MCF 10A (cell line): ENCODE measurements at regions of chr17 and their contacts with region 1.

Region 1: GRCh38 chr17:75289115-75289831 is at the start of gene SLC25A19:
- DNase-seq: peak; percentile 98
- H3K4me3 Mint-ChIP-seq: peak within 1 kb of the TSS; percentile 98
- H3K27ac Mint-ChIP-seq: peak within 1 kb of the TSS; percentile 97
- H3K4me1 Mint-ChIP-seq: peaks cover 7% of the 10 kb centered on the region
- H3K27me3 Mint-ChIP-seq: no peaks in the 10 kb centered on the region
- CTCF ChIP-seq: no peak
- total RNA-seq, gene SLC25A19: 14.8 and 22.6 TPM in 2 replicates

Region 2: GRCh38 chr17:75228305-75228704 is 61.0 kb before region 1 on chr17:
- CTCF ChIA-PET with region 1: no interaction called
- POLR2A ChIA-PET with region 1: no interaction called
- intact Hi-C with region 1: no loop called
- DNase-seq: no peak
- H3K4me3 Mint-ChIP-seq: no peak overlapping the region
- H3K27ac Mint-ChIP-seq: no peak overlapping the region
- H3K4me1 Mint-ChIP-seq: no peaks in the 10 kb centered on the region
- H3K27me3 Mint-ChIP-seq: no peaks in the 10 kb centered on the region
- CTCF ChIP-seq: no peak

Region 3: DNA sequence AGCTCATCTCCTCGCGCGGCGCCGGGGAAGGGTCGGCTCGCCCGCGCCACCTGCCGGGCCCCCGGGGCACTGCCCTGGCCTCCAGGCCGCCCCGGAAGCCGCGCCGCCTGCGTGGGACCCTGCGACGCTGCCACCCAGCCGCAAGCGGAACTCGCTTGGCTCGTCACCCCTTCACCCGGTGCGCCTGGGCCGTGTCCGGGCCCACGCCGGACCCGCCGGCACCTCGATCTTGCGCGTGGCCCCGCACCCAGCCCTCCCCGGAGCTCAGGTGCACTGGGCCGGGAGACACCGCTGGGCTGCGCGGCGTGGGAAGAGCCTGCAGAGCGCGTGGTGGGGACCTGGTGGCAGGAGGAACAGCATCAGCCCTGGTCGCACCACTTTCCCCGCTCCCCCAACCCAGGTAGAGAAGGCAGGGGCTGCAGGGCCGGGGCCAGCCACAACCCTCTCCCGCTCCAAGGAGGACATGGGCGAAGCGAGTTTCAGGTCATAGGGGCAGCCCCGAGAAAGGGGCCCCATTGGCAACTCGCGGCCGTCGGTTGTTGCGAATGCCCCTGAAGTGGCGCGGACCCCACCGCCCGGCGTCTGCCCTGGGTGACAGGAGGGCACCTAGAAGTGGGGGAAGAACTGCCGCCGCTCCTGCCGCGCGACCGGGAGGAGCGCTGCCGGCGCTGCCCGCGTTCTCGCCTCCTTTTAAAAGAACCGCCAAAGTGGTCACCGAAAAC is 17.9 kb before region 1 on chr17:
- CTCF ChIA-PET with region 1: interaction called, 13 read pairs
- POLR2A ChIA-PET with region 1: interaction called, 96 read pairs
- intact Hi-C with region 1: no loop called
- DNase-seq: peak; percentile 74
- H3K4me3 Mint-ChIP-seq: peak overlapping the region; percentile 74
- H3K27ac Mint-ChIP-seq: peak overlapping the region; percentile 39
- H3K4me1 Mint-ChIP-seq: peaks cover 23% of the 10 kb centered on the region
- H3K27me3 Mint-ChIP-seq: no peaks in the 10 kb centered on the region
- CTCF ChIP-seq: peak; percentile 67

Region 4: GRCh38 chr17:75309025-75309772 is 19.9 kb after region 1 on chr17:
- CTCF ChIA-PET with region 1: no interaction called
- POLR2A ChIA-PET with region 1: interaction called, 14 read pairs
- intact Hi-C with region 1: no loop called
- DNase-seq: no peak
- H3K4me3 Mint-ChIP-seq: no peak overlapping the region
- H3K27ac Mint-ChIP-seq: no peak overlapping the region
- H3K4me1 Mint-ChIP-seq: peaks cover 9% of the 10 kb centered on the region
- H3K27me3 Mint-ChIP-seq: no peaks in the 10 kb centered on the region
- CTCF ChIP-seq: no peak

Region 5: DNA sequence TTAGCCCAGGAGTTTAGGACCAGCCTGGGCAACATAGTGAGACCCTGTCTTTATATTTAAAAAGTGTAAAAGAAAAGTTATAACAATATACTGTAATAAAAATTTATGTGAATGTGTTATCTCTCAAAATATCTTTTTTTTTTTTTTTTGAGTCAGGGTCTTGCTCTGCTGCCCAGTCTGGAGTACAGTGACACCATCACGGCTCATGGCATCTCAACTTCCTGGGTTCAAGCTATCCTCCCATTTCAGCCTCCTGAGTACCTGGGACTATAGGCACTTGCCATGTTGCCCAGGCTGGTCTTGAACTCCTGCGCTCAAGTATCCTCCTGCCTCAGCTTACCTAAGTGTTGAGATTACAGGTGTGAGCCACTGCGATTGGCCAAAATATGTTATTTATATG is 45.5 kb after region 1 on chr17:
- CTCF ChIA-PET with region 1: no interaction called
- POLR2A ChIA-PET with region 1: no interaction called
- intact Hi-C with region 1: no loop called
- DNase-seq: no peak
- H3K4me3 Mint-ChIP-seq: no peak overlapping the region
- H3K27ac Mint-ChIP-seq: no peak overlapping the region
- H3K4me1 Mint-ChIP-seq: no peaks in the 10 kb centered on the region
- H3K27me3 Mint-ChIP-seq: no peaks in the 10 kb centered on the region
- CTCF ChIP-seq: no peak

Region 6: DNA sequence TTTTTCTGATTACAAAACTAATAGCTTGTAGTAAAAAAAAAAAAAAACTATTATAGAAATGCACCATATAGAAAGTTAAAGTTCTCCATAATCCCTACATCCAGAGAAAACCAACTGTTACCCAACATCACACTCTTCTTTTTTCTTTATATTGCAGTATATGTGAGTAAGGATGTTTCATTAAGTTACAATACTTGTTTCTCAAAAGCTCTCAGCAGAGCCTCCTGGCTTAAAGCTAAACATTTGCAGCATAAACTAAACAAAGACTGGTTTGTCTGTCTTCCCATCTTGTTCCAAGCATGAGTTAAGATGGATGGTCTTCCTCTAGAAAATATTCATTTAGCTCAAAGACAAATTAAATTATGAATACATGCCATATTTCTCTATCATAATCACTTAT is 91.0 kb after region 1 on chr17:
- CTCF ChIA-PET with region 1: no interaction called
- POLR2A ChIA-PET with region 1: no interaction called
- intact Hi-C with region 1: no loop called
- DNase-seq: no peak
- H3K4me3 Mint-ChIP-seq: no peak overlapping the region
- H3K27ac Mint-ChIP-seq: no peak overlapping the region
- H3K4me1 Mint-ChIP-seq: no peaks in the 10 kb centered on the region
- H3K27me3 Mint-ChIP-seq: no peaks in the 10 kb centered on the region
- CTCF ChIP-seq: no peak

Region 7: DNA sequence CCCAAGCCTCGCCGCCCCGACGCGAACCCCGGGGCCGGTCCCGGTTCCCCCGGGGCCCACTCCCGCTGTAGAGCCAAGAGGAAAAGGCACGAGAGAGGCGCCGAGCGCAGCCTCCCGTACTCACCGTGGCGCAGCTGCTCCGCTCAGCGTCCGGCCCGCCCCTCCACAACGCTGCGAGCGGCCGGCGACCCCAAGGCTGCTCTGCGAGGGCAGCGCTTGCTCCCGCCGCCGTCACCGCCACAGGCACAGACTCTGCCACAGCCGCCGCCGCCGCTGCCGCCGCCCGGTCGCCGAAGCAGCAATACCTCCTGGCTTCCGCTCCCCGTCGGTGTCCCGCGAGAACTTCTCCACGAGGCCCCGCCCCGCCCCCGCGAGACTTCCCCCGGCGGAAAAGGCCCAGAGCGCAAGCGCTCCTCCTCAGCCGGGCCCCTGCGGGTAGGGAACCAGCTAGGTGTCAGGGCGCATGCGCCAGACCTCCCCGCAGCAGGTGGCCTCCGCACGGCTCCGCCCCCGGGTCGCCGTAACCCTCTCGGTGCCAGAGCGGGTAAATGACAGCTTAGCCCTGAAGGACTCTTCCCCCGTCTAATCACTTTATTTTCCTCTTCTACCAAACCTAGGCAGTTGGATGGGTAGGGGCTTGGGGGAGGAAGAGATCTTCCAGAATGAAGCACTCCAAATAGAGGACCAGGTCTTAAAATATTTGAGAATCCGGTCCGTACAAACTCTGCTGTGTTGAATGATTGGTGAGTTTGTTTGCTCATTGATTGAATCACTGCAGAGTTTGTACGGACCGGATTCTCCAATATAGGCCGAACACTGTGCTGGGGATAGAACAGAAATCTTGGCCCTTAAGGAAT is 116.3 kb after region 1 on chr17 and contains the start of gene GRB2:
- CTCF ChIA-PET with region 1: interaction called, 3 read pairs
- POLR2A ChIA-PET with region 1: interaction called, 32 read pairs
- intact Hi-C with region 1: no loop called
- DNase-seq: peak; percentile 96
- H3K4me3 Mint-ChIP-seq: peak within 1 kb of the TSS; percentile 88
- H3K27ac Mint-ChIP-seq: peak within 1 kb of the TSS; percentile 80
- H3K4me1 Mint-ChIP-seq: peaks cover 11% of the 10 kb centered on the region
- H3K27me3 Mint-ChIP-seq: no peaks in the 10 kb centered on the region
- CTCF ChIP-seq: no peak
- total RNA-seq, gene GRB2: 67.1 and 74.6 TPM in 2 replicates

Region 8: DNA sequence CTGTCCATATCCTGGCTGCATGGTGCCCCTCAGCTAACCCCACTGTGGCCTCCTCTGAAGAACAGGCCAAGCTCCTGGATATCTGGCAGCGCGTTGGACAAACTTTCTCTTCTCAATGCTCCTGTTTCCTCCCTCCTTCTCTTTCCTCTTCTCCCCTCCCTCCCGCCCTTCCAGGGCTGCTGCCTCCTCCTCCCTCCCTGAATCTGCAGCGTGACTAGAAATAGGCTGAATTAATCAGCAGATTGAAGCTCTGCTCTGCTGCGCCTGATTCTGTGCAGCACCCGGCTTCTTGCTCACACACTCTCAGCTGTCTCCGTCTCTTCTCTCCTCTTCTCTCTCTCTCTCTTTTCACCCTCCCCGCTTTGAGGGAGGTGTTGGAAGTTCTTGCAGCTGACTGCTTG is 187.0 kb after region 1 on chr17:
- CTCF ChIA-PET with region 1: no interaction called
- POLR2A ChIA-PET with region 1: no interaction called
- intact Hi-C with region 1: no loop called
- DNase-seq: no peak
- H3K4me3 Mint-ChIP-seq: no peak overlapping the region
- H3K27ac Mint-ChIP-seq: no peak overlapping the region
- H3K4me1 Mint-ChIP-seq: no peaks in the 10 kb centered on the region
- H3K27me3 Mint-ChIP-seq: no peaks in the 10 kb centered on the region
- CTCF ChIP-seq: no peak